Endothelial cell of umbilical vein (primary cell): ENCODE measurements at regions of chr17 and their contacts with region 1.

Region 1: DNA sequence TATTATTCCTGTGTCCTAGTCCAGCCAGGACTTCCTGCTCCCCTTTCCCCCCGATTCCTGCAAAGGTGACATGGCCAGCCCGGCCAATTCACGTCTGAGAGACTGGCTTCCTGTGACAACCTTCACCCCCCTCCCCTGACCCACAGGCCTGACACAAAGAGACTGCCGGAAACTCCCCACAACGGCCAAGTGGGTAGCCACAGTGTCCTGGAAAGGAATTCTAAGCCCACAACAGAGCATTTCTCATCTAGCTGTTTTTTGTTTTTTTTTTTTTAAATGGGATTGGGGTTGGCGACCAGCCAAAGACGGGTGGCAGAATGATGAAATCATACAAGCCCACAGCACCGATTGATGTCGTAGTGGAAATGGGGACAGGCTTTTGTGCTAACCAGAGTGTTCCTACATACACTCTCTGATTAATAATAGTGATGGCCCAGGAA is 2.8 kb upstream of the XAF1 start:
- DNase-seq: peak; percentile 87
- H3K4me3 ChIP-seq: peak overlapping the region in 1 of 3 experiments; percentile 13
- H3K27ac ChIP-seq: peak overlapping the region; percentile 96
- H3K4me1 ChIP-seq: peaks cover 36% of the 10 kb centered on the region
- H3K27me3 ChIP-seq: no peaks in the 10 kb centered on the region
- CTCF ChIP-seq: no peak
- POLR2A ChIP-seq: no peak

Region 2: DNA sequence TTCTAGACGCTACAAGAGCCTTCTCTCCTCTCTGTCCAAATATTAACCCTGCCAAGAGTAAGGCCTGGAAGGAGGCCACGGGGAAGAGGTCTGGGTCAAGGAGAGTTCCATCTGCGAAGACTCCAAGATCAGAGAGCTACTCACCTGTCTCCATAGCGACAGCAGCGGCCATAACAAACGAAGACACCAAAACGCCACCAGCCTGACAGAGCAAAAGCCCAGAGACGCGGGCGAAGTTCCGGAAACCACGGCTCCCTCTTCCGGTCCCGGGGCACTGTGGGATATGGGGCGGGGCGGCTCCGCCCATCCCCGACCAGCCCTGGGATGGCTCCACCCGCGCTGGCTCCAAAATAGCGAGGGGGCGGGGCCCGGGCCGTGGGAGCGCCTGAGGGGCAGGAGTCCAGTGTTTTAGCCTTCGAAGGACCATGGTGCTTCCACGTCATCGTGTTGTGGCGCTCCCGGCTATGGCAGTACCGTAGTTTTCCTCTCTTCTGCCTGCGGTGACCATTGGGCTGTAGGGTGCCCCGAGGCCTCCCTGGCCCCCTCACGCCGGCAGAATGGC is 101.6 kb before region 1 on chr17 and contains the starts of genes C17orf100 and MED31:
- CTCF ChIA-PET with region 1: no interaction called
- POLR2A ChIA-PET with region 1: no interaction called
- dilution Hi-C with region 1: no loop called
- intact Hi-C with region 1: loop called (anchors 2 kb)
- DNase-seq: peak; percentile 88
- H3K4me3 ChIP-seq: peak within 1 kb of the TSS; percentile 94 to 99 (median 96)
- H3K27ac ChIP-seq: peak within 1 kb of the TSS; percentile 98
- H3K4me1 ChIP-seq: peaks cover 12% of the 10 kb centered on the region
- H3K27me3 ChIP-seq: peaks cover 31 to 38% of the 10 kb centered on the region in 2 experiments
- CTCF ChIP-seq: no peak
- POLR2A ChIP-seq: peak; percentile 95
- total RNA-seq, gene C17orf100: 1.4 and 1.6 TPM in 2 replicates
- total RNA-seq, gene MED31: 28.0 and 29.4 TPM in 2 replicates

Region 3: DNA sequence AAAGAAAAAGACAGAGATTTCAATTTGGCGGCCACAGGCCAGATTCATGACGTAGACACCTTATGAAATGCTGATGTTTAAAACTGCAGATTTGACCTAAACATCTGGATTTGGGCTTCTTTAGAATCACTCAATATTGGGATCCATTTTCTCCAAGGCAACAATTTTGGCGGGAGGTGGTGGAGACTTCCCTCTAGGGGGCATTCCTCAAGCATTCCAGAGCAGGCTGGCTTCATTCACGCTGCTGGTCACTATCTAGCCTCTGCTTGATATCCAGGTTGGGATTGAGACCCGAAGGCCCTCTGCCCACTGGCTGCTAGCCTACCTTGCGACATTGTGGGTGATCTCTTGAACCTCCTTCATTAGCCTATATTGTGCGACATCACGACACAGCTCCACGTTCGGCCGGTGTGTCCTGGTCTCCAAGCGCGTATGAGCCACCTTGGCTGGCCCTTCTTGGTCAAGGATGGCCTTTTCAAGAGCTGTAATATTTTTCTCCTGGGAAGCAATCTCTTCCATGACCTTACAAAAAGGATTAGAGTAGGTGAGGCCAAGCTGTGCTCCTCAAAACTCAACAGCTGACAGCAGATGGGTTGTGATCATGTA is 47.5 kb after region 1 on chr17:
- CTCF ChIA-PET with region 1: no interaction called
- POLR2A ChIA-PET with region 1: no interaction called
- dilution Hi-C with region 1: no loop called
- intact Hi-C with region 1: loop called (anchors 1 kb)
- DNase-seq: peak; percentile 28
- H3K4me3 ChIP-seq: no peak overlapping the region
- H3K27ac ChIP-seq: no peak overlapping the region
- H3K4me1 ChIP-seq: no peaks in the 10 kb centered on the region
- H3K27me3 ChIP-seq: peaks cover 2 to 6% of the 10 kb centered on the region in 2 experiments
- CTCF ChIP-seq: peak; percentile 18 to 66
- POLR2A ChIP-seq: no peak

Region 4: GRCh38 chr17:7014261-7014994 is 261.4 kb after region 1 on chr17:
- CTCF ChIA-PET with region 1: no interaction called
- POLR2A ChIA-PET with region 1: no interaction called
- dilution Hi-C with region 1: no loop called
- intact Hi-C with region 1: loop called (anchors 2 kb)
- DNase-seq: peak; percentile 99
- H3K4me3 ChIP-seq: peak overlapping the region; percentile 32 to 99 (median 93)
- H3K27ac ChIP-seq: peak overlapping the region; percentile 99
- H3K4me1 ChIP-seq: peaks cover 40% of the 10 kb centered on the region
- H3K27me3 ChIP-seq: no peaks in the 10 kb centered on the region
- CTCF ChIP-seq: peak; percentile 53 to 71
- POLR2A ChIP-seq: peak; percentile 80